Activated CD4-positive, alpha-beta T cell treated with anti-CD3 and anti-CD28 coated beads for 36 hours (primary cell): ENCODE measurements at regions of chr7 and their contacts with region 1.

Region 1: GRCh38 chr7:33287748-33288147 is 158.4 kb downstream of the BBS9 start:
- DNase-seq: no peak
- ATAC-seq: no peak
- H3K4me3 Mint-ChIP-seq: no peak overlapping the region
- H3K27ac Mint-ChIP-seq: no peak overlapping the region
- H3K4me1 Mint-ChIP-seq: no peaks in the 10 kb centered on the region
- H3K27me3 Mint-ChIP-seq: no peaks in the 10 kb centered on the region

Region 2: DNA sequence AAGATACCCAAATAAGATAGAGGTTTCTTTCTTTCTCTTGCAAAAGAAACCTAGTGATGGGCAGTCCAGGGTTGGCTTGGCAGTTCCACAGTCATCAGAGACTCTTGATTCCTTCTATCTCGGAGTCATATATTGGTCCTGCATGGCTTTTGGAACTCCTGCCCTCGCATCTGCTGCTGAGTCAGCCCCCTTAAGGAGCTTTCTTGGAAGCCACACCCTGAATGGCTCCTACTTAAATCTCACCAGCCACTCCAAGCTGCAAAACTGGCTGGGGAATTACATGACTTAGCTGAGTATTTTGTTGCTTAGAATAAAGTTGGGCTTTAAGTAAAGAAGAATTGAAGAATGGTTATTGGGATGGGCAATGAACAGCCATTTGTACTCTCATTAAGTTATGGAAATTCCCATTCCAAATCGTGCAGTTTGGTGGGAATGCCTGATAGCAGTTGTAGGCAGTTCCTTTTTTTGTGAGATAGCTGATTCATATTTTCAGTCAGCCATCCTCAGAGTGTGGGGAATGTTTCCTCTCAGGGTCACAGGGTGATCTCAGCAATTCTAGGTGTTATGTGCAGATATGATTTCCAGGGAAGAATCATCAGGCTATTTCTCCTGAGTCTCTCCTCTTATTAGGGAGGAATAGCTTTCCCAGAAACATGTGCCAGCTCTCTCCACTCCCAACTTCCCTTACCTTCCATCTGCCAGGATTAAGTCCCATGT is 51.5 kb after region 1 on chr7:
- CTCF ChIA-PET with region 1: no interaction called
- POLR2A ChIA-PET with region 1: no interaction called
- intact Hi-C with region 1: loop called in 1 of 2 experiments (anchors 5 kb)
- DNase-seq: no peak
- ATAC-seq: no peak
- H3K4me3 Mint-ChIP-seq: no peak overlapping the region
- H3K27ac Mint-ChIP-seq: no peak overlapping the region
- H3K4me1 Mint-ChIP-seq: no peaks in the 10 kb centered on the region
- H3K27me3 Mint-ChIP-seq: no peaks in the 10 kb centered on the region